Activated naive CD4-positive, alpha-beta T cell treated with anti-CD3 and anti-CD28 coated beads for 36 hours (primary cell): ENCODE measurements at regions of chr15 and their contacts with region 1.

Region 1: GRCh38 chr15:68730471-68730919 is 90.2 kb downstream of the ANP32A start:
- DNase-seq: peak; percentile 43
- H3K4me3 Mint-ChIP-seq: no peak overlapping the region
- H3K27ac Mint-ChIP-seq: no peak overlapping the region
- H3K4me1 Mint-ChIP-seq: peaks cover 2% of the 10 kb centered on the region
- H3K27me3 Mint-ChIP-seq: no peaks in the 10 kb centered on the region

Region 2: GRCh38 chr15:68829068-68829467 is 98.6 kb after region 1 on chr15:
- CTCF ChIA-PET with region 1: interaction called, 4 read pairs
- intact Hi-C with region 1: loop called (anchors 1 kb)
- DNase-seq: peak; percentile 47
- H3K4me3 Mint-ChIP-seq: no peak overlapping the region
- H3K27ac Mint-ChIP-seq: no peak overlapping the region
- H3K4me1 Mint-ChIP-seq: peaks cover 18% of the 10 kb centered on the region
- H3K27me3 Mint-ChIP-seq: no peaks in the 10 kb centered on the region

Region 3: GRCh38 chr15:68930268-68931022 is 199.9 kb after region 1 on chr15 and contains the start of gene SPESP1:
- CTCF ChIA-PET with region 1: no interaction called
- intact Hi-C with region 1: no loop called
- DNase-seq: peak; percentile 49
- H3K4me3 Mint-ChIP-seq: peak within 1 kb of the TSS; percentile 52
- H3K27ac Mint-ChIP-seq: no peak within 1 kb of the TSS
- H3K4me1 Mint-ChIP-seq: no peaks in the 10 kb centered on the region
- H3K27me3 Mint-ChIP-seq: peaks cover 22% of the 10 kb centered on the region
- total RNA-seq, gene SPESP1: 0.47 to 0.81 TPM

Region 4: DNA sequence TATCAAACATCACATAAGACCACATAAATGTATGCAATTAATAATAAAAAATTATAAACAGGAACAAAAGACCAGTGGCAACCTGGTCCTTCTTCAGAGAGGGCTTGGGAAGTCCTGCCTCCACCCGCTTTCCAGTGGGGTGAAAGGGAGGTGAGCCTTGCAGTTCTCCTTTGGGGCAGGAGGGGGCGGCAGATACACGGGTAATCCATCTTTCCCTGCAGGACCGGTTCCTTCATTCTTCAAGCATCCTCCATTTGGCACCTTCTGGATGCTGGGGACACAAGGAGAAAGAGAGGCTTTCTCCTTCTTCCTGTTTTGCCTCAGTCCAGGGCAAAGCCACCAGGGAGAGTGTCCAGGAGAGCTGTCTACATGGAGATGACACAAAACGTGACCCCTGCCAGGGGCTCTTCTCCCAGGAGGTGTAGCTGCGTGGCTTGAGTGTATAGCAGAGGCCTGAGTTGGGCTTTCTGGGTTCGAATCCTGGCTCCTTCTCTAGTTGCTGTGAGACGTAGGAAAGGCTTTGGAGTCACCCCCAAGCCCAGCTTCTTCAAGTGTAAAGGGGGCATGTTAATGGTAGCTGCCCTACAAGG is 745.4 kb after region 1 on chr15:
- CTCF ChIA-PET with region 1: no interaction called
- intact Hi-C with region 1: no loop called
- DNase-seq: peak; percentile 82
- H3K4me3 Mint-ChIP-seq: no peak overlapping the region
- H3K27ac Mint-ChIP-seq: no peak overlapping the region
- H3K4me1 Mint-ChIP-seq: no peaks in the 10 kb centered on the region
- H3K27me3 Mint-ChIP-seq: no peaks in the 10 kb centered on the region